HepG2 (cell line): ENCODE measurements at regions of chr19 and their contacts with region 1.

Region 1: DNA sequence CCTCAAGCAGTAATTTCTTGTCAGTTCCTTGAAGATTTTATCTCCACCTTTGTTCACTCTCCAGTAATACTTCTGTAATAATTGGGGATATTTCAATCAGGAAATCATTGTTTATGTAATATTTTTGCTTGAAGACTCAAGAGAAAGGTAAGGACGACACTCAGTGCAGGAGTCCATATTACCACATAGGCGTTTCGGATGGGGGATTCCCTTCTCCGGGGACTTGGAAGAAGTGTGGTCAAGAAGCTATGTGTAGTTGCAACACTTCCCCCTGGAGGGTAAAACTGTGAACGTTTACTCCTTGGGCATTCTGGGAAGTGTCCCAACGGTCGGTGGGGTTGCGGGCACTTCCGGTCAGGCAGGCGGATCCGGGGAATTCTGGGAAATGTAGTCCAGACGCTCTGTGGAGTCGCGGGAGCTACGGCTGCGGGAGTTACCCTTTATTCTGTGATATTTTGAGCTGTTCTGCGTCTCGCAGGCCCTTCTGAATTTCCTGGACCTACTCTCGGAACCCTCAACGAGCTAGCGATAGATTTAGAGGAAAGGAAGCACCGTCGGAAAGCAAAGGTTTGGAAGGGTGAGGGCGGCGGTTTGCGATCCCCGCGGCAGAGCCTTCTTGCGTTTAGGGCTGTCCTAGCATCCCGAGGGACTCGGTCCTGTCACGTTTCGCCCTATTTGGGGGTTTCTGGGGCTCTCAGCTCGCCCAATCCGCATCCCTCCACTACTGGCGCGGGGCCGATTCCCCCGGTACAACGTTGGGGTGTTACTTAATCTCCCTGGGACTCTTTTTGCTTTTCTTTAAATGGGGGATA is at the start of gene ZNF221:
- DNase-seq: peak; percentile 91
- ATAC-seq: peak; percentile 99
- H3K4me3 ChIP-seq: peak within 1 kb of the TSS; percentile 95 to 97 (median 96)
- H3K27ac ChIP-seq: peak within 1 kb of the TSS; percentile 25
- H3K4me1 ChIP-seq: no peaks in the 10 kb centered on the region
- H3K27me3 ChIP-seq: no peaks in the 10 kb centered on the region; a peak in 1 of 5 replicates
- CTCF ChIP-seq: peak; percentile 76
- EP300 ChIP-seq: no peak
- POLR2A ChIP-seq: no peak
- RAD21 ChIP-seq: no peak
- total RNA-seq, gene ZNF221: 3.4 and 4.5 TPM in 2 replicates

Region 2: GRCh38 chr19:43997631-43998290 is 46.7 kb after region 1 on chr19:
- CTCF ChIA-PET with region 1: no interaction called
- POLR2A ChIA-PET with region 1: no interaction called
- in situ Hi-C with region 1: no loop called
- intact Hi-C with region 1: no loop called
- DNase-seq: no peak
- ATAC-seq: no peak
- H3K4me3 ChIP-seq: no peak overlapping the region
- H3K27ac ChIP-seq: no peak overlapping the region
- H3K4me1 ChIP-seq: peaks cover 6% of the 10 kb centered on the region
- H3K27me3 ChIP-seq: no peaks in the 10 kb centered on the region; a peak in 1 of 5 replicates
- CTCF ChIP-seq: no peak
- EP300 ChIP-seq: no peak
- POLR2A ChIP-seq: no peak
- RAD21 ChIP-seq: no peak

Region 3: GRCh38 chr19:44025217-44025936 is 74.3 kb after region 1 on chr19 and contains the start of gene ZNF222:
- CTCF ChIA-PET with region 1: no interaction called
- POLR2A ChIA-PET with region 1: no interaction called
- in situ Hi-C with region 1: no loop called
- intact Hi-C with region 1: loop called (anchors 2 kb)
- DNase-seq: peak; percentile 76
- ATAC-seq: peak; percentile 100
- H3K4me3 ChIP-seq: peak within 1 kb of the TSS; percentile 88 to 97 (median 91)
- H3K27ac ChIP-seq: peak within 1 kb of the TSS; percentile 42
- H3K4me1 ChIP-seq: peaks cover 16% of the 10 kb centered on the region; the same call in 1 of the 2 replicates
- H3K27me3 ChIP-seq: no peaks in the 10 kb centered on the region; a peak in 1 of 5 replicates
- CTCF ChIP-seq: no peak
- EP300 ChIP-seq: no peak
- POLR2A ChIP-seq: peak in 1 of 2 experiments; percentile 63; a peak in 2 of 4 replicates
- RAD21 ChIP-seq: no peak
- total RNA-seq, gene ZNF222: 6.1 and 6.2 TPM in 2 replicates

Region 4: GRCh38 chr19:44071824-44072542 is 120.9 kb after region 1 on chr19 and contains the start of gene ZNF284:
- CTCF ChIA-PET with region 1: no interaction called
- POLR2A ChIA-PET with region 1: no interaction called
- in situ Hi-C with region 1: no loop called
- intact Hi-C with region 1: loop called (anchors 10 kb)
- DNase-seq: peak; percentile 84
- ATAC-seq: peak; percentile 99
- H3K4me3 ChIP-seq: peak within 1 kb of the TSS; percentile 70 to 90 (median 83)
- H3K27ac ChIP-seq: peak within 1 kb of the TSS; percentile 55
- H3K4me1 ChIP-seq: peaks cover 17% of the 10 kb centered on the region
- H3K27me3 ChIP-seq: no peaks in the 10 kb centered on the region; a peak in 1 of 5 replicates
- CTCF ChIP-seq: no peak
- EP300 ChIP-seq: no peak
- POLR2A ChIP-seq: peak; percentile 47 to 80; a peak in 3 of 4 replicates
- RAD21 ChIP-seq: no peak
- total RNA-seq, gene ZNF284: 2.3 and 3.2 TPM in 2 replicates